Activated CD8-positive, alpha-beta T cell treated with anti-CD3 and anti-CD28 coated beads, Interleukin-2, amount 10 ng/mL, durations not matched to agents 7 days and 5 days (primary cell): ENCODE measurements at regions of chr19 and their contacts with region 1.

Region 1: GRCh38 chr19:13060964-13061927 is 41.4 kb downstream of the LYL1 start:
- DNase-seq: peak; percentile 85
- ATAC-seq: peak; percentile 98
- H3K4me3 Mint-ChIP-seq: peak overlapping the region; percentile 68
- H3K27ac Mint-ChIP-seq: no peak overlapping the region
- H3K4me1 Mint-ChIP-seq: peaks cover 9% of the 10 kb centered on the region
- H3K27me3 Mint-ChIP-seq: peaks cover 24% of the 10 kb centered on the region

Region 2: DNA sequence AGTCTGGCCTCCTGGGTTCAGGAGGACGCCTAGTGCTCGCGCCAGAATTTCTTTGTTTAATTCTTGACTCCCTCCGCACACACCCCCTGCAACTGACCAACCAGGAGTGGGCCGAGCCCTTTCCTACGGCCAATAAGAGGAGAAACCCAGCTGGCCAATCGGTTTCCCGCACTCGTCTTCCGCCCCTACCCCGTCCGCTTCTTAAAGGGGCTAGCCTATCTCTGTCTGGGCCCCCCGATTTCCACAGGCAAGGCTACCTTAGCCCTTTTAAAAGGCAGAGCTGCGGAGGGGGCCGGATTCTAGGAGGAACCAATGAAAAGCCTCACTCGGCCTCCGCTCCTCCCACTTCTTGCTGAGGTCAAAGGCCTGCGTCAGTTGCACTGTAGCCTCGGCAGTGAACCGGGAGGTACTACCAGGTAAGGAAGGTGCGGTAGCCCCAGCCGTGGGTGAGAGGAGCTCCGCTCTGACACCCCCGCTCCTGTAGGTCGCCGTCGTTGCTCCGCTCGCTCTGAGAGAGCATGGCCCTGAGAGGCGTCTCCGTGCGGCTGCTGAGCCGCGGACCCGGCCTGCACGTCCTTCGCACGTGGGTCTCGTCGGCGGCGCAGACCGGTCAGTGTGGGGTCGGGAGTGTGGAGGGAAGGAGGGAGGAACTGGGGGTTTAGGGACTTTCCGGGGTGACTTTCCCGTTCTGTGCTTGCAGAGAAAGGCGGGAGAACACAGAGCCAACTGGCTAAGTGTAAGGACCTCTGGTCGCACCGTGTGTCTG is 170.3 kb before region 1 on chr19 and contains the start of gene GCDH:
- CTCF ChIA-PET with region 1: no interaction called
- POLR2A ChIA-PET with region 1: no interaction called
- DNase-seq: peak; percentile 99
- ATAC-seq: peak; percentile 96
- H3K4me3 Mint-ChIP-seq: peak within 1 kb of the TSS; percentile 95
- H3K27ac Mint-ChIP-seq: peak within 1 kb of the TSS; percentile 91
- H3K4me1 Mint-ChIP-seq: peaks cover 35% of the 10 kb centered on the region
- H3K27me3 Mint-ChIP-seq: peaks cover 3% of the 10 kb centered on the region
- total RNA-seq, gene GCDH: 39.5 to 42.5 TPM

Region 3: GRCh38 chr19:12983542-12984142 is 77.6 kb before region 1 on chr19:
- CTCF ChIA-PET with region 1: interaction called, 82 read pairs
- POLR2A ChIA-PET with region 1: no interaction called
- DNase-seq: peak; percentile 82
- ATAC-seq: peak; percentile 78
- H3K4me3 Mint-ChIP-seq: no peak overlapping the region
- H3K27ac Mint-ChIP-seq: no peak overlapping the region
- H3K4me1 Mint-ChIP-seq: no peaks in the 10 kb centered on the region
- H3K27me3 Mint-ChIP-seq: peaks cover 2% of the 10 kb centered on the region

Region 4: DNA sequence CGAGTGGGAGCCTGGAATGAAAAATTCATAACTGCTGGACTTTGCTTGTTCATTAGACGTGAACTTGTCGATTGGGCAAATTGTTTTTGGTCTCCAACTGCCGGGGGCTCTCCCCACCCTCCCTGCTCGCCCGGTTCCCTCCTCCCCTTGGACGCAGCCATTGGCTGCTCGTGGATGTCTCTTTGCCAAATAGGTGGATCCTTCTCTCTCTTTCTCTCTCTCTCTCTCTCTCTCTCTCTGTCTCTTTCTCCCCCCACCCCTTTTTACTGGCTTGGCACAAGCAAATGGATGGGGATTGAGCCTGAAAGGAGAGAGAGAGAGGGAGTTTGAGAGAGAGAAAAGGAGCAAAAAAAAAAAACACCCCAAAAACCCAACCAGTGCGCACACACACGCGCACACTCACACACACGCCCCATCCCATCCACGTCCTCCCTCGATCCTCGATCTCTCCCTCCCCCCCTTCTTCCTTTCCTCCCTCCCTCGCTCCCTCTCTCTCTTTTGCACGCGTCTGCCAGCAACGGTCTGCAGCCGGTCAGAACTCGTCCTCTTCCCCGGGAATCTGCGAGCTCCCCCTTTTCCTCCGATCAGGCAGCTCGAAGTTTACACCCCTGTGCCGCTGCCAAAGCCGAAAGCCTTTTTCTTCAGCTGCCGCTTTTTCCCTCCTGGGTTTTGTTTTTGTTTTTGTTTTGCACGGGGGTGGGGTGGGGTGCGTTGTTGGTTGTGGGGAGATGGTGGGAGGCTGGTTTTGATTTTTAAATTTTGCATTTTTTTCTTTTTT is 38.2 kb before region 1 on chr19:
- CTCF ChIA-PET with region 1: interaction called, 22 read pairs
- POLR2A ChIA-PET with region 1: no interaction called
- DNase-seq: no peak
- ATAC-seq: no peak
- H3K4me3 Mint-ChIP-seq: peak overlapping the region; percentile 65
- H3K27ac Mint-ChIP-seq: no peak overlapping the region
- H3K4me1 Mint-ChIP-seq: peaks cover 17% of the 10 kb centered on the region
- H3K27me3 Mint-ChIP-seq: peaks cover 45% of the 10 kb centered on the region

Region 5: GRCh38 chr19:13044231-13044836 is 16.9 kb before region 1 on chr19:
- CTCF ChIA-PET with region 1: interaction called, 52 read pairs
- POLR2A ChIA-PET with region 1: no interaction called
- DNase-seq: peak; percentile 39
- ATAC-seq: peak; percentile 68
- H3K4me3 Mint-ChIP-seq: no peak overlapping the region
- H3K27ac Mint-ChIP-seq: peak overlapping the region; percentile 52
- H3K4me1 Mint-ChIP-seq: peaks cover 24% of the 10 kb centered on the region
- H3K27me3 Mint-ChIP-seq: peaks cover 3% of the 10 kb centered on the region

Region 6: DNA sequence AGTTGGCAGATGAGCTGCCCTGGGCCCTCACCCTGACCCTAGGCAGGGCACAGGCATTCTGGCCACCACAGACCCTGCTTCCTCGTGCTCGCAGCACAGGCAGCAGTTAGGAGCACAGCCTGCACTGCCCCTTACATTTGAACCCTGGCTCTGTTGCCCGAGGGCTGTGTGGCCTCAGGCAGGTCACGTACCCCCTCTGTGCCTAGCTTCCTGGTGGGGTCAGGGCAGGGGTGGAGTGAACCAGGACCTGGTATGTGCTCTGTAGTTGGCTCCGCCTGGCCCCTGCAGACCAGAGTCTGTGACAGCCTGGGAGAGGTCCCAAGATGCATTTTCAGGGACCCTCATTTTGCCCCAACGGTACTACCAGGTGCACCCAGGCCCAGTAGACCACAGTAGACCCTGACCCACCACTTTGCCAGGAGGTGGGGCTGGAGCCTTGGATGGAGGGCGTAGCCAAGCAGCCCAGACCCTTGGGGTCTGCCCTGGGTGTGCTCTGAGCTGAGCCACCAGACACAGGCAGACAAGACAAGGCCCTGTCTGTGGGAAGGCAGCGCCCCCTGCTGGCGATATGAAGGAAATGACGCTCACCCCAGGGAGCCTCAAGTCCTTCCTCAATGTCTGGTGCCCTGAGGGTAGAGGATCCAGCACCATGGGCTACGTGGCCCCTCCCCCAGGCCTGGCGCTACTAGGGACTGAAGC is 32.3 kb after region 1 on chr19:
- CTCF ChIA-PET with region 1: interaction called, 50 read pairs
- POLR2A ChIA-PET with region 1: no interaction called
- DNase-seq: peak; percentile 88
- ATAC-seq: peak; percentile 79
- H3K4me3 Mint-ChIP-seq: no peak overlapping the region
- H3K27ac Mint-ChIP-seq: no peak overlapping the region
- H3K4me1 Mint-ChIP-seq: peaks cover 26% of the 10 kb centered on the region
- H3K27me3 Mint-ChIP-seq: peaks cover 32% of the 10 kb centered on the region

Region 7: DNA sequence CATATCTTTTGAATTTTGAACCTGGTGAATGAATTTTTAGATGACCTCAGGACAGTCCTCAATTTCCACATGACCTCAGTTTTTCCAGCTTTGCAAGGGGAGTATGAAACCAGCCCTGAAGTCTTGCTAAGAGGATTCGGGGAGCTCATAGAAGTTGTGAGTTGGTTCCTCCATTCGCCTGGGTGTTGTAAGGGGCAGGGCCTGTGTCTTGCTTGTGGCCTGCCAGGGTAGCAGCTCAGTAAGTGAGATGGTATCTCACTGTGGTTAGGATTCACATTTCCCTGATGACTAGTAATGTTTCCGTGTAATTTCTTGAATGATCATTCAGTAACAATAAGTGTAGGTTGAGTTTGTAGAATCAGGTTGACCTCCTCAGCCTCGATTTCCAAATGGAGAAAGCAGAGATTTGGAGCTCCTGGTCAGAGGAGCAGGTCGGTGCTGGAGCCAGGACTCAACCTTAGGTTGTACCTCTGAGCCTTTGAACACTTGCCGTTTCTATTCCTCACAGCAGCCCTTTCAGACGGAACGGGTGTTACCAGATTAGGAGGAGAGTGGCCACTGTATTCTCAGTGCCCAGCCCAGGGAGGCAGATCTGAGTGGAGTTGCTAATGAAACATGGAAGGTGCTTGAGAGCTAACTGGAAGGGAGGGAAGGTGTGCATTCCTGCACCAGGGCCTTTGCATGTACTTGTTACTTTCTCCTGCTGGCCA is 71.4 kb after region 1 on chr19:
- CTCF ChIA-PET with region 1: no interaction called
- POLR2A ChIA-PET with region 1: no interaction called
- DNase-seq: peak; percentile 66
- ATAC-seq: peak; percentile 93
- H3K4me3 Mint-ChIP-seq: peak overlapping the region; percentile 19
- H3K27ac Mint-ChIP-seq: peak overlapping the region; percentile 75
- H3K4me1 Mint-ChIP-seq: peaks cover 34% of the 10 kb centered on the region
- H3K27me3 Mint-ChIP-seq: no peaks in the 10 kb centered on the region